H1 (cell line): ENCODE measurements at regions of chr20 and their contacts with region 1.

Region 1: DNA sequence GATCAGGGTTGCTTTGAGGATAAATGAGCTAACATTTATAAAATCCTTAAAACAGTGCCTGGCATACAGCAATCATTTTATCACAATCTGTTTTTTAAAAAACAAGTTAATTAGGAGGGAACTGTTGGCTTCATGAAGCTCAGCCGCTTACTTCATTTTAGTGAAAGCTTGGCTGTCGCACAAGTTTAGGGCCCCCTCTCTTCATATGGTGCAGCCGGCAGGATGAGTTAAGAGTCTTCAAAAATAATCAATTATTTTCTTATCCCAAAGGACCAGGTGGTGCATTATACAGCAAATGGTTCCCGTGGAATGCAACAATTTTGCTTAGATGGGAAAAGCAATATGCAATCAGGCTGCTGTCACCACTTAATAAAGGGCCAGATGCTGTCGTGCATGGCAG is 57.4 kb upstream of the PROKR2 start:
- DNase-seq: no peak
- H3K4me3 ChIP-seq: no peak overlapping the region
- H3K27ac ChIP-seq: no peak overlapping the region
- H3K4me1 ChIP-seq: no peaks in the 10 kb centered on the region
- H3K27me3 ChIP-seq: no peaks in the 10 kb centered on the region
- CTCF ChIP-seq: no peak
- EP300 ChIP-seq: no peak
- POLR2A ChIP-seq: no peak
- RAD21 ChIP-seq: no peak

Region 2: DNA sequence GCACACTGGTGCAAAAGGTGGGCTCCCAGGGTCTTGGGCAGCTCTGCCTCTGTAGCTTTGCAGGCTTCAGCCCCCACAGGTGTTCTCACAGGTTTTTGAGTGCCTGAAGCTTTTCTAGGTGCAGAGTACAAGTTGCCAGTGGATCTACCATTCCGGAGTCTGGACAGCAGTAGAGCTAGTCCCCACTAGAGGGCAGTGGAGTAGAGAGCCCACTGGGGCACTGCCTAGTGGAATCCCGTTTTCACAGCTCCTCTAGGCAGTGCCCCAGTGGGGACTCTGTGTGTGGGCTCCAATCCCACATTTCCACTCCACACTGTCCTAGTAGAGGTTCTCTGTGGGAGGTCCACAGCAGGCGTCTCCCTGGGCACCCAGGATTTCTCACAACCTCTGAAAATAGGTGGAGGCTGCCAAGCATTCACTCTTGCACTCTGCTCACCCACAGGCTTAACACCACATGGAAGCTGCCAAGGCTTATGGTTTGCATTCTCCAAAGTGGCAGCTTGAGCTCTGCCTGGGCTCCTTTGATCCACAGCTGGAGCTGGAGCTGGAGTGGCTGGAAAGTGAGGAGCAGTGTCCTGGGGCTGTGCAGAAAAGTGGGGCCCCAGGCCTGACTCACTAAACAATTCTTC is 28.8 kb after region 1 on chr20:
- CTCF ChIA-PET with region 1: interaction called, 10 read pairs
- POLR2A ChIA-PET with region 1: no interaction called
- DNase-seq: peak in 1 of 2 experiments; percentile 74
- H3K4me3 ChIP-seq: no peak overlapping the region
- H3K27ac ChIP-seq: no peak overlapping the region
- H3K4me1 ChIP-seq: no peaks in the 10 kb centered on the region
- H3K27me3 ChIP-seq: no peaks in the 10 kb centered on the region
- CTCF ChIP-seq: peak; percentile 74 to 78 (median 75)
- EP300 ChIP-seq: no peak
- POLR2A ChIP-seq: no peak
- RAD21 ChIP-seq: peak; percentile 62 to 73

Region 3: GRCh38 chr20:5416086-5416485 is 41.9 kb after region 1 on chr20:
- CTCF ChIA-PET with region 1: no interaction called
- POLR2A ChIA-PET with region 1: no interaction called
- DNase-seq: no peak
- H3K4me3 ChIP-seq: no peak overlapping the region
- H3K27ac ChIP-seq: no peak overlapping the region
- H3K4me1 ChIP-seq: no peaks in the 10 kb centered on the region
- H3K27me3 ChIP-seq: no peaks in the 10 kb centered on the region
- CTCF ChIP-seq: no peak
- EP300 ChIP-seq: no peak
- POLR2A ChIP-seq: no peak
- RAD21 ChIP-seq: no peak

Region 4: GRCh38 chr20:5430670-5431069 is 56.5 kb after region 1 on chr20:
- CTCF ChIA-PET with region 1: no interaction called
- POLR2A ChIA-PET with region 1: no interaction called
- DNase-seq: no peak
- H3K4me3 ChIP-seq: no peak overlapping the region
- H3K27ac ChIP-seq: no peak overlapping the region
- H3K4me1 ChIP-seq: no peaks in the 10 kb centered on the region
- H3K27me3 ChIP-seq: peaks cover 0 to 2% (median 0%) of the 10 kb centered on the region in 4 experiments; a peak in 1 of 7 replicates
- CTCF ChIP-seq: peak; percentile 39 to 49 (median 40)
- EP300 ChIP-seq: no peak
- POLR2A ChIP-seq: no peak
- RAD21 ChIP-seq: peak; percentile 34 to 40; a peak in 3 of 4 replicates